ENCODE measurements at regions of chr17 and their contacts with region 1.

Region 1: DNA sequence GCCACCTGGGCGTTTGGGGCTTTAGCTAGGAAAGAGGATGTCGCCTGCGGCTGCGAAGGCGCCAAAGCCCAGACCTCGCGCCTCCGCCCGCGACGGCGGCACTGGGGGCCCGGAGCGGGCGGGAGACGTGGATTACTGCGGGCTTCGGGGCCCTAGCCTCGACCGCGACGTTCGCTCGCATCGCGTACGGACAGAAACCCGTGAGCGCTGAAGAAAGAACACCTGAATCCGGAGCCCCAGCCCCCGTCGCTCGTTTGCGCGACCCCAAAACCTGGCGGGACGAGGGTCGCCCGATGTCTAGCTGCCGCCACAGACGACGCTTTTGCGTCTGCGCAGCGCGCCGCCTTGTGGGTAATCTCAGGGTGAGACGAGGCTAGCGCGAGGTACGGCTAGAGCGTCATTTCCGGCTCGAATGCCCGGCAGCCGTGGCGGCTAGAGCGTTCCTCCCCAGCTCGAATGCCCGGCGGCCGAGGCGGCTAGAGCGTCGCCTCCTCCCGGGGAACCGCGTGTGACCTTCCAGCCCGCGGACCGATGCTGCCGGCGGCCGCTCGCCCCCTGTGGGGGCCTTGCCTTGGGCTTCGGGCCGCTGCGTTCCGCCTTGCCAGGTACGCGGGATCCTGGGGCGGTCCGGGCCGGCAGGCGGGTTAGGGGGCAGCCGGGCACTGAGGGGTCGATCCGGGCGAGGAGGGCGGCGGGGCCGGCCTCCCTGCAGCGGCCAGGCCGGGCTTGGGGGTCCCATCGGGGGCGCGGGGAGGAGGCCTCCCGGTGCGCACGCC is at the start of gene MRPL12:
- DNase-seq: peak; percentile 95
- ATAC-seq: peak; percentile 89
- H3K4me3 Mint-ChIP-seq: peak within 1 kb of the TSS; percentile 86
- H3K27ac Mint-ChIP-seq: peak within 1 kb of the TSS; percentile 97
- H3K4me1 Mint-ChIP-seq: peaks cover 24% of the 10 kb centered on the region
- H3K27me3 Mint-ChIP-seq: no peaks in the 10 kb centered on the region
- total RNA-seq, gene MRPL12: 94.0 to 116 TPM

Region 2: DNA sequence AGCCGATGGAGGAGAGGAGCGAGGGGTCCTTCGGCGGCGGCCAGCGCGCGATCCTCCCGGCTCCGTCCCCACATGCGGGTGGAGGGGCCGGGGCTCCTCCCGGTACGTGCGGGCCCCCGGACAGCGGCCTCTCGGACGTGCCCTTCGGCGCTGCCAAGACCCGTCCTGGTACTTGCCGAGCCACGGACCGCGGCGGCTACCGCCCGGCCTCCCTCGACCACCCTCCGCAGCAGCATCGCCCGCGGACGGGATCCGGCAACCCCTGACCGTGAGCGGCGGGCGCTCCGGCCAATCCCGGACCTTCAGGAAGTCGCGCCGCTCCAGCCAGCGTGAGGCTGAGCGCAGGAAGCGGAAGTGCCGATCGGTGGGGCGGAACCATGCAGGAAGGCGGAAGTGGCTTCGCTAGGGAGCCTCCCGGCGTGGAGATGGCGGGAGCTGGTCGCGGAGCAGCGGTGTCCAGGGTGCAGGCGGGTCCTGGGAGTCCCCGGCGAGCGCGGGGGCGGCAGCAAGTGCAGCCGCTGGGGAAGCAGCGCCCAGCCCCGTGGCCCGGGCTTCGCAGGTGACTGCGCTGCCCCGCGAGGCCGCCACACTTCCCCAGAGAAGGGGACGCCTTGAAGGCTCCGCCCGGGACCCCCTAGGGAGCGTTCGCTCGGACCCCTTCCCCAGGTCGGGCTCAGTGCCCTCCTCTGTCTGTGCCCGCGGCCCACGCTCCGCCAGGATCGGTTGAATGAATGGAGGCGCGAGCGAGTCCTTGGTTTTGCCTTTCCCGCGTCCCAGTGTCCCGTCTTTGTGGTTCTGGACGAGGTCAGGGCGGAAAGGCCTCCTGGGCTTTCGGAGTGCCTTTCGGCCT is 36.6 kb before region 1 on chr17 and contains the starts of genes CCDC137 and OXLD1:
- CTCF ChIA-PET with region 1: no interaction called
- POLR2A ChIA-PET with region 1: interaction called, 6 read pairs
- intact Hi-C with region 1: loop called (anchors 1 to 5 kb)
- DNase-seq: peak; percentile 97
- ATAC-seq: peak; percentile 91
- H3K4me3 Mint-ChIP-seq: peak within 1 kb of the TSS; percentile 91
- H3K27ac Mint-ChIP-seq: peak within 1 kb of the TSS; percentile 97
- H3K4me1 Mint-ChIP-seq: peaks cover 53% of the 10 kb centered on the region
- H3K27me3 Mint-ChIP-seq: no peaks in the 10 kb centered on the region
- total RNA-seq, gene CCDC137: 30.0 to 36.6 TPM
- total RNA-seq, gene OXLD1: 29.4 to 45.3 TPM

Region 3: GRCh38 chr17:81683584-81684237 is 19.4 kb before region 1 on chr17 and contains the starts of genes ARL16 and HGS:
- CTCF ChIA-PET with region 1: interaction called, 5 read pairs
- POLR2A ChIA-PET with region 1: interaction called, 24 read pairs
- intact Hi-C with region 1: loop called (anchors 1 kb)
- DNase-seq: peak; percentile 98
- ATAC-seq: peak; percentile 98
- H3K4me3 Mint-ChIP-seq: peak within 1 kb of the TSS; percentile 87
- H3K27ac Mint-ChIP-seq: peak within 1 kb of the TSS; percentile 83
- H3K4me1 Mint-ChIP-seq: peaks cover 30% of the 10 kb centered on the region
- H3K27me3 Mint-ChIP-seq: no peaks in the 10 kb centered on the region
- total RNA-seq, gene ARL16: 39.0 to 39.1 TPM
- total RNA-seq, gene HGS: 100 to 102 TPM